ENCODE measurements at regions of chr21 and their contacts with region 1.

Region 1: DNA sequence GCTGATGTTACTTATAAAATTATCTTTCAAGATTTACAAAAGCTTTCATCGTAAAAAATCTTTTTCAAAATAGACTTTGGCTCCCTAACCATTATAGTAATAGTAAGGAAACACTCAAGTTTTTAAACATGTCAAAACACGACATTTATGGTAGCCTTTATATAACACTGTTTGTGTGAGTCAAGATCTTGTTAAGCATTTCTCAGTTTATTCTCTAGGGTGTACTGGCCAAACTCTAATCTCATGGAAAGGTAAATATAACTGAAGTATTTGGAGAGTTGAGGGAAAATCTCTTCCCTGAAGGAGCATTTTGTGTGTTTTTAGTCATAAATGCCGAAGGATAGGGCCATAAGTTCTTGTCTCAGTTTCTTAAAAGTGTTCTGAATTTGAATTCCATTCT is 790.9 kb upstream of the NCAM2 start:
- DNase-seq: no peak
- H3K4me3 ChIP-seq: no peak overlapping the region
- CTCF ChIP-seq: no peak
- POLR2A ChIP-seq: no peak

Region 2: DNA sequence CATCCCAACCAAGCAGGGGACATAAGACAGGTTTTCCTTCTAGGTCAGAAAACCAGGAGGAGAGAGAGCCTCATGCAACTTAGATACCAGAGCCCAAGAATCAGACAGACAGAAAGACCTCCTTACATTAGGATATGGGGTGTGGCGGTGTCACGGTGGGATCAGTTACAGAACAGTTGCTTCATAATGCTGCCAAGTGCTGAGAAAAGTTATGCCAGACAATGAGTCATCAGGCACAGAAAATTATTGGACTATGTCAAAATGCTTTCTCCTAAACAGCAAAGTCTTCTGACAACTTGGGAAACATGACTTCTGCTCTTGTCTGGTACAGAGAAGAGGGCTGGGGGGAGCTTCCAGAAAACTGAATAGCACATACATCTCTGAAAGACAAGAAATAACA is 683.6 kb before region 1 on chr21:
- intact Hi-C with region 1: loop called (anchors 5 kb)
- DNase-seq: no peak
- H3K4me3 ChIP-seq: no peak overlapping the region
- CTCF ChIP-seq: no peak
- POLR2A ChIP-seq: no peak

Measured in lower leg skin (tissue), 4 donors.